RWPE1 (cell line): ENCODE measurements at regions of chr1 and their contacts with region 1.

Region 1: GRCh38 chr1:61049850-61050540 is 32.4 kb upstream of the NFIA start:
- DNase-seq: peak; percentile 75
- H3K27ac ChIP-seq: peak overlapping the region; percentile 86
- CTCF ChIP-seq: peak; percentile 92

Region 2: DNA sequence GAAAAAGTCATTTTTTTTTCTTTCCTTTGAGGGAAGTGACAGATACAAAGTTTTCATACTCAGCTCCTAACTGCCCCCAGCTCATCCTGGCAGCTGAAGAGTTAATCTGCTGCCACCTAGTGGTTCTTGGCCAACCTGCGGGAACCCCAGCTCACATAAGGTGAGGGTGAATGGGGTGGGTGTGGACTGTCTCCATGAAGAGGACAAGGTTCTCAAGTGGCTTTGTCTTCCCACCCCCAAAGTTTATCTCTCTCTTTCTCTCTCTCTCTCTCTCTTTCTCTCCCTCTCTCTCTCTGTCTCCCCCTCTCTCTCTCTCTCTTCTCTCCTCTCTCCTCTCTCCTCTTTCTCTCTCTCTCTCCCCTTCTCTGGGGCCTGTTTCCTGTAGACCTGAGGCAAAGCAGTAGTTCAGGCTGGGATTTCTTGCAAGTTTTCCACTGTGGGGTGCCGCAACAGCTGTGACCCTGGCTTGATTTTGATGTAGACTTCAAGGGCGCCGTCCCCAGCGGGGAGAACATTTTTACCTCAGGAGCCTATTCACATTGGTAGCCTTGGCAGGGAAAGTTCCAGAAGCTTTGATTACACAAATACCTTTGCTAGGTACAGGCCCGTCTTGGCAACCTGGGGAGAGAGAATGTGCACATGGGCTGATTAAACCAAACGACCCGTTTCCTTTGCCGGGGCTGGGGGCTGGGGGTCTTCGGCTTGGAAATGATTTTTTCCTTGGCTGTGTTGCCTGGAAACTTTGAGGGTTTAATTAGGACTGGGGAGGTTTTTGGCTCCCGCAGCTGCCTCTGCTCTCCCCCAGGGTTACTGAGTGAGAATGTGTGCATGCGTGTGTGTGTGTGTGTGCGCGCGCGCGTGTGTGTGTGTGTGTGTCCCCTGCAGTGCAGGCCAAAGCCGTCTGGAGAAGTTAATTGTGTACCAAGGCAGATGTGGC is 539.0 kb after region 1 on chr1:
- CTCF ChIA-PET with region 1: interaction called, 10 read pairs
- POLR2A ChIA-PET with region 1: no interaction called
- DNase-seq: peak; percentile 75
- H3K27ac ChIP-seq: peak overlapping the region; percentile 38
- CTCF ChIP-seq: peak; percentile 88